HCT116 (cell line): ENCODE measurements at regions of chr9 and their contacts with region 1.

Region 1: DNA sequence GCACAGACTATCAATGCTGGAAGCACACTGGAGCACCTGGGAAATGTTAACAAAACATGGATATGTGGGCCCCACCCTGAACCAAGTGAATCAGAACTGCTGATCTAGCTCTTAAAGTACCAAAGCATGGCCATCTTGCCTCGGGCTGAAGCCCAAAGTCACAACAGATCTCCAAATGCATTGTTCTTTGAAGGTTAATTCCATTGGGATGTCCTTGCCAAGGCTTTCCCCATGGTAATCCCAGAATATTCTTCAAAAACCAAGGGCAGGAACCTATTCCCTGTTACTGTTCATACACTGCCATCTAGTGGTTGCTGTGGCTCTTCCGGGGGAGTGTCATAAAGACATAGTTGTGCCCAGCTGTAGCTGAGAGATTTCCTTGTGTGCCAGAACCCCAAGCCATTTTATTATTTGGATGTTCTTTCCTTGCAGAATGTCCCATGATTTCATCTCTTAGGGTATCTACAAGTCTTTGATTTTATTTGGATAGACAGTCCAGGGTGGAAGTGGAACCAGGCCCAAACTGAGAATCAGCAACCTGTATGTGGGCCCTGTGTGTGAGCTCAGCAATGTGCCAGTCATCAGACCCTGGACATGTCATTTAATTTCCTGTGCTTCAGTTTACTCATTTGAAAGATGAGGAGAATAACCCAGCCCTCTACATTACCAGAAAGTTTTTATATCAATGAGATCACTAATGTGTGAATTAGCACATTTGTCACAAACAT is 290.0 kb downstream of the ACTL7B start:
- DNase-seq: peak; percentile 72
- ATAC-seq: peak; percentile 93
- H3K4me3 ChIP-seq: no peak overlapping the region
- H3K27ac ChIP-seq: no peak overlapping the region
- H3K4me1 ChIP-seq: peaks cover 0 to 7% of the 10 kb centered on the region in 2 experiments; a peak in 1 of 4 replicates
- H3K27me3 ChIP-seq: peaks cover 4% of the 10 kb centered on the region; the same call in 1 of the 2 replicates
- CTCF ChIP-seq: peak; percentile 87 to 94 (median 87)
- POLR2A ChIP-seq: no peak
- RAD21 ChIP-seq: peak; percentile 99

Region 2: GRCh38 chr9:107484117-107484723 is 1081.6 kb before region 1 on chr9:
- CTCF ChIA-PET with region 1: interaction called, 7 read pairs
- POLR2A ChIA-PET with region 1: no interaction called
- RAD21 ChIA-PET with region 1: no interaction called
- intact Hi-C with region 1: loop called (anchors 5 kb)
- DNase-seq: peak; percentile 64
- ATAC-seq: peak; percentile 63
- H3K4me3 ChIP-seq: no peak overlapping the region
- H3K27ac ChIP-seq: no peak overlapping the region
- H3K4me1 ChIP-seq: peaks cover 13 to 37% of the 10 kb centered on the region in 2 experiments; a peak in 3 of 4 replicates
- H3K27me3 ChIP-seq: no peaks in the 10 kb centered on the region
- CTCF ChIP-seq: peak in 2 of 3 experiments; percentile 44 to 59; a peak in 3 of 6 replicates
- POLR2A ChIP-seq: no peak
- RAD21 ChIP-seq: no peak

Region 3: DNA sequence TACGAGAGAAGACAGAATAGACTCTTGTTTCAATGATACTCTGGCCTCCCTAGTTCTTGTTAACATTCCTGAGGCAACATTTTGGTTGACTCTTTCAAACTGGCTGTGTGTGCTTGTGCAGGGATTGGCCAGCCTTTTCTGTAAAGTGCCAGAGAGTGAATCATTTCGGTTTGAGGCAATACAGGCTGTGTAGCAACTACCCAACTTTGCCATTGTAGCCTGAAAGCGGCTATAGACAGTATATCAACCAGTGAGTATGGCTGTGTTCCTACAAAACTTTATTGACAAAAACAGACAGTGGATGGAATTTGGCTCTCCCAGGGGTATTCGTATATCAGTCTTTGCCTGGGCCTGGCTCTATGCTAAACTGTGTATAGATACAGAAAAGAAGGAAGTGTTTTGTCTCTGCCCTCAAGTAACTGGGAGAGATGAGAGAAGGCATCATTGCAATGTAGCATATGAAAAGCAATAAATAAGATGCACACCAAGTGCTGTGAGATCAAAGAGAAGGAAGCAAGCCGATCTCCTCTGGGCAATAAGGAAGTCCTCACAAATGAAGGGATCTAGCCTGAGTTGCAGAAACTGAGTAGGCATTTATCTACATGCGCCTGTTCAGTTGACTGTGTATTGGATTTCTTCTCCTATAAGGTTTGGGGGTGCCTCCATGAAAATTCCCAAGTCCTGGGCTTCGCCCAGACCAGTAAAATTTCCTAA is 508.2 kb before region 1 on chr9:
- CTCF ChIA-PET with region 1: no interaction called
- POLR2A ChIA-PET with region 1: no interaction called
- RAD21 ChIA-PET with region 1: no interaction called
- intact Hi-C with region 1: loop called (anchors 5 kb)
- DNase-seq: no peak
- ATAC-seq: peak; percentile 74
- H3K4me3 ChIP-seq: peak overlapping the region in 1 of 2 experiments; percentile 31; a peak in 2 of 4 replicates
- H3K27ac ChIP-seq: peak overlapping the region; percentile 11; the same call in 1 of the 2 replicates
- H3K4me1 ChIP-seq: peaks cover 39 to 81% of the 10 kb centered on the region in 2 experiments
- H3K27me3 ChIP-seq: no peaks in the 10 kb centered on the region
- CTCF ChIP-seq: no peak
- POLR2A ChIP-seq: no peak
- RAD21 ChIP-seq: 0 out of 2 replicates have a peak, but pooled peaks have one; percentile 11

Region 4: DNA sequence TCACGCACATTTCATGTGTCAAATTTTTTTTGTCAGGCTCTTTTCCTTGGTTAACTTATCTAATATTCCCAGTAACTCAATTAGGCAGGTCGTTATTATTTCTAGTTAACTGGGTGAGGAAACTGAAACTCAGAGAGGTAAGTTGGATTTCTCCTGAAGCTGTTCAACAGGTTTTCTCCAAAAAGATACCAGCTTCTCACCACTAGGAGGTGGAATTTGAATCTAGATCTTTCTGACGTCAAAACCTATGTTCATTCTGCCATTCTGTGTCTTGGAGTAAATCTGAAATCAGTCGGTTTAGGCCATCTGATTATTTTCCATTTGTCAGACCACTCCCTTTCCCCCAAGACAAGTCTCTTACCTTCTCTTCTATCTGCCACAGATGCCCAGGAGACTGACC is 282.9 kb before region 1 on chr9:
- CTCF ChIA-PET with region 1: interaction called, 18 read pairs
- POLR2A ChIA-PET with region 1: no interaction called
- RAD21 ChIA-PET with region 1: no interaction called
- intact Hi-C with region 1: loop called (anchors 2 kb)
- DNase-seq: no peak
- ATAC-seq: no peak
- H3K4me3 ChIP-seq: no peak overlapping the region
- H3K27ac ChIP-seq: no peak overlapping the region
- H3K4me1 ChIP-seq: no peaks in the 10 kb centered on the region
- H3K27me3 ChIP-seq: no peaks in the 10 kb centered on the region
- CTCF ChIP-seq: peak in 2 of 3 experiments; percentile 32 to 55; a peak in 3 of 6 replicates
- POLR2A ChIP-seq: no peak
- RAD21 ChIP-seq: peak; percentile 16; the same call in 1 of the 2 replicates

Region 5: GRCh38 chr9:108761655-108762347 is 196.0 kb after region 1 on chr9:
- CTCF ChIA-PET with region 1: interaction called, 5 read pairs
- POLR2A ChIA-PET with region 1: no interaction called
- RAD21 ChIA-PET with region 1: no interaction called
- intact Hi-C with region 1: loop called (anchors 5 kb)
- DNase-seq: peak; percentile 33
- ATAC-seq: peak; percentile 95
- H3K4me3 ChIP-seq: no peak overlapping the region
- H3K27ac ChIP-seq: no peak overlapping the region
- H3K4me1 ChIP-seq: no peaks in the 10 kb centered on the region
- H3K27me3 ChIP-seq: no peaks in the 10 kb centered on the region
- CTCF ChIP-seq: peak; percentile 70 to 93 (median 80); a peak in 5 of 6 replicates
- POLR2A ChIP-seq: no peak
- RAD21 ChIP-seq: peak; percentile 94